MCF 10A (cell line): ENCODE measurements at regions of chr22 and their contacts with region 1.

Region 1: GRCh38 chr22:41448189-41448808 is 1.7 kb upstream of the TOB2 start:
- DNase-seq: peak; percentile 100
- H3K4me3 Mint-ChIP-seq: peak overlapping the region; percentile 96
- H3K27ac Mint-ChIP-seq: peak overlapping the region; percentile 97
- H3K4me1 Mint-ChIP-seq: peaks cover 11% of the 10 kb centered on the region
- H3K27me3 Mint-ChIP-seq: no peaks in the 10 kb centered on the region
- CTCF ChIP-seq: no peak

Region 2: GRCh38 chr22:40867109-40867508 is 581.2 kb before region 1 on chr22:
- CTCF ChIA-PET with region 1: no interaction called
- POLR2A ChIA-PET with region 1: no interaction called
- intact Hi-C with region 1: no loop called
- DNase-seq: no peak
- H3K4me3 Mint-ChIP-seq: no peak overlapping the region
- H3K27ac Mint-ChIP-seq: no peak overlapping the region
- H3K4me1 Mint-ChIP-seq: peaks cover 5% of the 10 kb centered on the region
- H3K27me3 Mint-ChIP-seq: no peaks in the 10 kb centered on the region
- CTCF ChIP-seq: no peak

Region 3: DNA sequence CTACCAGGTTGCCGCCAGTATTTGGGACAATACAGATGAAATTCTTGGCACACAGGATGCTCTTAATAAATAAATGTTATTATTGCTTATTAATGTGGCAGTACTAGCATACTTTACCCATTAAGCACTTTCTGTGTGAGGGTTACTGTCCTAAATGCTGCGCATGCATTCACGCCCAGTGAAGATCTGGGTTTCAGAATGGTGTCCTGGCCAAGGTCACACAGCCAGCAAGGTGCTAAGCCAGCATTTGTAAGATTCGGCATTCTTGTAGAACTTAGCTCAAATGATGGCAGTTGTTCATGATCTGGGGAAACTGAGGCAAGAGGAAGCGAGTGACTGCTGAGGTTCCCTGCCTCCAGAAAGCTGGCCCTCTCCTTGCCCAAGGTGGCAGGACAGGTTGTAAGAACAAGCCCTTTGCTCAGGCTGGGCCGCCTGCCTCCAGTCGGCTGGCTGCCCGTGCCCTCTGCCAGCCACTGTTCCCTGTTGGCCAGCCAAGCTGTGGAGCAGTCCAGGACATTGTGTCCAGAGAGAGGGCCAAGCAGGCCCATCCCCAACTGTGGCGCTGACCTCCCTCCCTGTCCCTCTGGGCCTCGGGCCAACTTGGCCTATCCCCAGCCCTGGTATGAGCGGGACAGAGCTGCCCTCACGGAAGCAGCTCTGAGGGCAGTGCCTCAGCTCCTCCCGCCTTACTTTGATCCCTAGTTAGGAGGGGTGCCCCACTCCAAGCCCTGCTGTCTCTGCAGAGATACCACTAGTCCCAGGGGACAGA is 30.5 kb before region 1 on chr22:
- CTCF ChIA-PET with region 1: interaction called, 6 read pairs
- POLR2A ChIA-PET with region 1: interaction called, 39 read pairs
- intact Hi-C with region 1: no loop called
- DNase-seq: peak; percentile 85
- H3K4me3 Mint-ChIP-seq: no peak overlapping the region
- H3K27ac Mint-ChIP-seq: no peak overlapping the region
- H3K4me1 Mint-ChIP-seq: peaks cover 15% of the 10 kb centered on the region
- H3K27me3 Mint-ChIP-seq: no peaks in the 10 kb centered on the region
- CTCF ChIP-seq: no peak